Stomach (tissue), 19 donors: ENCODE measurements at regions of chr1 and their contacts with region 1.

Region 1: GRCh38 chr1:21368515-21369289 is 71.2 kb upstream of the NBPF3 start:
- DNase-seq: peak; percentile 82 to 93
- H3K4me3 ChIP-seq: no peak overlapping the region
- H3K27ac ChIP-seq: no peak overlapping the region
- H3K4me1 ChIP-seq: peaks cover 0 to 10% (median 7%) of the 10 kb centered on the region in 4 donors
- H3K27me3 ChIP-seq: no peaks in the 10 kb centered on the region
- CTCF ChIP-seq: peak; percentile 74 to 100 (median 96)
- EP300 ChIP-seq: no peak
- POLR2A ChIP-seq: no peak

Region 2: GRCh38 chr1:21238141-21238800 is 130.4 kb before region 1 on chr1:
- intact Hi-C with region 1: loop called (anchors 5 kb)
- DNase-seq: no peak
- H3K4me3 ChIP-seq: no peak overlapping the region
- H3K27ac ChIP-seq: no peak overlapping the region
- H3K4me1 ChIP-seq: peaks cover 0 to 4% (median 0%) of the 10 kb centered on the region in 4 donors
- H3K27me3 ChIP-seq: no peaks in the 10 kb centered on the region
- CTCF ChIP-seq: no peak
- EP300 ChIP-seq: no peak
- POLR2A ChIP-seq: no peak

Region 3: DNA sequence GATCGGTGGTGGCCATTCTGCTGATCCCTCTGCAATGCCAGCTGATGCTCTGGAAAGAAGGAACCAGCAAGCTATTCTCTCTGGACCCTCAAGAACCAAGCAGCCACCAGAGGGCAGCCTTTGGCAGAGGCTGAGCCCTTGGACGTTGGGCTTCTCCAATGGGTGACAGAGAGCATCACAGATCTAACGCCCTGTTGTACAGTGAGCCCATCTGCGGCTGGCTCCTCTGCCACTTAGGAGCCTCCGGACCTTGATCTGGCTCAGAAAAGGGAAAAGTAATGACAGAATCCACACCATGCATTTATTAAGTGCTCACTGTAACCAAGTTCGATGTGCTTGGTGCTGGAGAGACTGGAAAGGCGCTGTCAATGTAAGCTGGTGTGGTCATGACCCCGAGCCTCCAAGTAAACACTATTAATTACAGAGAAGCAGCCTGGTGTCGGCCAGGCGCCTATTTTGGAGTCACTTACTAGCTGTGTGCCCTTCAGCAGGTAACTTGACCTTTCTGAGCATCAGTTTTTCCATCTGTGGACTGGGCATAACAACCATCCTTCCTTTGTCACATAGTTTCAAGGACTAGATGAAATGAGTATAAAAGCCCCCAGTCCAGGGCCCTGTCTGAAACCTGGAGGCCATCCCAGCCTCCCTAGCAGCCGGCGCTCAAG is 113.3 kb before region 1 on chr1:
- intact Hi-C with region 1: loop called (anchors 5 kb)
- DNase-seq: peak; percentile 93 to 94
- H3K4me3 ChIP-seq: no peak overlapping the region
- H3K27ac ChIP-seq: peak overlapping the region; percentile 1 to 79 (median 68)
- H3K4me1 ChIP-seq: peaks cover 26 to 51% (median 45%) of the 10 kb centered on the region in 4 donors
- H3K27me3 ChIP-seq: no peaks in the 10 kb centered on the region
- CTCF ChIP-seq: peak in 5 of 7 experiments; percentile 68 to 89 (median 83)
- EP300 ChIP-seq: no peak
- POLR2A ChIP-seq: no peak

Region 4: DNA sequence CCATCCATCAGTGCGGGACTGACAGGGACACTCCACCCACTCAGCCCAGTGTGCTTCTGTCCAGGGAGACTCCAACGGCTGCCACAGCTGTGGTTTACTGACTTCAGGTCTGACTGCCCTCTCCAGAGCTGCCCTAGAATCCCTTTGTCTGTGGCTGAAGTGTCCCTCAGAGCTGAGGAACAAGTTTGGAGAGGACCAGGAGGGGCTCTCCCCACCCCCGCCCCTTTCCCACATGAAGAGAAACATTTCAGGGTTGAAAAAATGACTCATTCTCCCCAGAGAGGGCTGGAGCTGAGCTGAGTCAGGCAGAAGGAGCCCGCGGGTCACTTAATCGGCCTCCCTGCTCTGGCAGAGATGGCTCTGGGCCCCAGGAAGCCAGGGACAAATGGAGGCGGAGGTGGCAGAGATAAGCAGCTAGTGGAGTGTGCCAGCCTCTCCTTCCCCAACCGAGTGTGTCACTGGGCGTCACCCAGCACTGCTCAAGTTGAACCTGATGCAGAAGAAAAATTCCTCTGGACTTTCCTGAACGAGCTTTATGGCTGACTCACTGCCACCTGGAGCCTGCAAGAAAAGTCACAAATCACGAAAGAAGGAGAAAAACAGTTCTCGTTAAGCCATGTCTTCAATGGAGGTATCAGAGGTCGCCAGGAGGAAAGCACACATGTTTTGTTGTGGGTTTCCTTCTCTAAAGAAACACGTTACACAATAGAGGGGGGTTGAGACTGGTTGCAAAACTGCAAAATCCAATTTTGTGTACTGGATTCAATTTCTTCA is 44.1 kb before region 1 on chr1:
- intact Hi-C with region 1: no loop called
- DNase-seq: peak; percentile 89 to 90
- H3K4me3 ChIP-seq: peak overlapping the region in 2 of 4 donors; percentile 3 to 11
- H3K27ac ChIP-seq: peak overlapping the region; percentile 83 to 93 (median 91)
- H3K4me1 ChIP-seq: peaks cover 88 to 100% (median 95%) of the 10 kb centered on the region in 4 donors
- H3K27me3 ChIP-seq: no peaks in the 10 kb centered on the region
- CTCF ChIP-seq: no peak
- EP300 ChIP-seq: no peak
- POLR2A ChIP-seq: no peak